ENCODE measurements at regions of chr9 and their contacts with region 1.

Region 1: GRCh38 chr9:76433836-76434235 is 25.1 kb upstream of the GCNT1 start:
- DNase-seq: no peak
- ATAC-seq: no peak
- H3K4me3 ChIP-seq: no peak overlapping the region
- H3K4me3 Mint-ChIP-seq: no peak overlapping the region
- H3K27ac ChIP-seq: no peak overlapping the region
- H3K27ac Mint-ChIP-seq: no peak overlapping the region
- H3K4me1 ChIP-seq: no peaks in the 10 kb centered on the region
- H3K4me1 Mint-ChIP-seq: no peaks in the 10 kb centered on the region
- H3K27me3 ChIP-seq: peaks cover 0 to 6% of the 10 kb centered on the region in 2 experiments
- H3K27me3 Mint-ChIP-seq: no peaks in the 10 kb centered on the region

Region 2: DNA sequence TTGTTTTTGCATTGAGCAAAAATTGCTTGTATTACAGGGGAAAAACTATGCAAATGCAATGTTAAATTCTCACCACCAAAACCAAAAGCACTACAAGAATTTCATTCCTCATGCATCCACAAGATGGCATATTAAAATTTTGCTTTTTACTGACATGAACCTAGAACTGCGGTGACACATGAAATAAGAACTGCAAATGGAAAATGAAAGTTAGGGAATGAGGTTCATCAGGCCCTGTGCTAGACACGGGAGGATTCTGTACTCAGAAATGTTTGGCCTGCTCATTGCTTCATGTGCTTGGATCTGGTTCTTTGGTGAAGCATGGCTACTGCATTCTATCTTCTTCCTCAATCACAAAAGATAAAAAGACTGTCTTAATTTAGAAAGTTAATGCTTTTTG is 30.5 kb before region 1 on chr9:
- CTCF ChIA-PET with region 1: no interaction called
- POLR2A ChIA-PET with region 1: no interaction called
- DNase-seq: peak in 6 of 35 experiments; percentile 1 to 73 (median 8)
- ATAC-seq: peak; percentile 69 to 98 (median 76)
- H3K4me3 ChIP-seq: no peak overlapping the region
- H3K4me3 Mint-ChIP-seq: peak overlapping the region; percentile 43 to 63 (median 51)
- H3K27ac ChIP-seq: peak overlapping the region; percentile 16
- H3K27ac Mint-ChIP-seq: peak overlapping the region; percentile 87 to 91
- H3K4me1 ChIP-seq: peaks cover 0 to 3% of the 10 kb centered on the region in 2 experiments
- H3K4me1 Mint-ChIP-seq: peaks cover 9 to 23% (median 15%) of the 10 kb centered on the region in 3 donors
- H3K27me3 ChIP-seq: no peaks in the 10 kb centered on the region
- H3K27me3 Mint-ChIP-seq: no peaks in the 10 kb centered on the region

Region 3: GRCh38 chr9:76419782-76420380 is 14.0 kb before region 1 on chr9:
- CTCF ChIA-PET with region 1: interaction called in 1 of 2 experiments, 11 read pairs
- POLR2A ChIA-PET with region 1: no interaction called
- DNase-seq: peak in 1 of 35 experiments; percentile 21
- ATAC-seq: no peak
- H3K4me3 ChIP-seq: no peak overlapping the region
- H3K4me3 Mint-ChIP-seq: no peak overlapping the region
- H3K27ac ChIP-seq: no peak overlapping the region
- H3K27ac Mint-ChIP-seq: no peak overlapping the region
- H3K4me1 ChIP-seq: peaks cover 4 to 10% of the 10 kb centered on the region in 2 experiments
- H3K4me1 Mint-ChIP-seq: peaks cover 14 to 38% (median 29%) of the 10 kb centered on the region in 3 donors
- H3K27me3 ChIP-seq: no peaks in the 10 kb centered on the region
- H3K27me3 Mint-ChIP-seq: no peaks in the 10 kb centered on the region

Region 4: DNA sequence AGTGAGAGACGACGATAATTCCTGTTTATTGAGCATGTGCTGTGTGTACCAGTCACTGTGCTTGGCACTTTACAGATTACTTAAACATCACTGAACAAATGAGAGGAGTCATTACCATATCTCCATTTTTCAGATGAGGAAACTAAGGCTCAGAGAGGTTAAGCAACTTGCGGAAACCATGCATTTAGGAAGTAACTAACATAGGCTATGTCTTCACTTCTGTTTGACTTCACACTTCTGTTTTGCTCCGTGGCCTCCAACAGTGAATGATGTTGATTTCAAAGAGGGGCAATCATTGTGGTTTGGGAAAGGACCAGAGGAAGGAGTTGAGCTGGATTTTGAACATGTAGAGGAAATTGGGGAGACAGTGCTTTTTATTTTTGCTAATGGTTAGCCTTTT is 41.9 kb after region 1 on chr9:
- CTCF ChIA-PET with region 1: no interaction called
- POLR2A ChIA-PET with region 1: no interaction called
- DNase-seq: no peak
- ATAC-seq: no peak
- H3K4me3 ChIP-seq: no peak overlapping the region
- H3K4me3 Mint-ChIP-seq: no peak overlapping the region
- H3K27ac ChIP-seq: no peak overlapping the region
- H3K27ac Mint-ChIP-seq: no peak overlapping the region
- H3K4me1 ChIP-seq: peaks cover 0 to 5% of the 10 kb centered on the region in 2 experiments
- H3K4me1 Mint-ChIP-seq: peaks cover 0 to 16% (median 0%) of the 10 kb centered on the region in 3 donors
- H3K27me3 ChIP-seq: peaks cover 0 to 2% of the 10 kb centered on the region in 2 experiments
- H3K27me3 Mint-ChIP-seq: no peaks in the 10 kb centered on the region

Region 5: DNA sequence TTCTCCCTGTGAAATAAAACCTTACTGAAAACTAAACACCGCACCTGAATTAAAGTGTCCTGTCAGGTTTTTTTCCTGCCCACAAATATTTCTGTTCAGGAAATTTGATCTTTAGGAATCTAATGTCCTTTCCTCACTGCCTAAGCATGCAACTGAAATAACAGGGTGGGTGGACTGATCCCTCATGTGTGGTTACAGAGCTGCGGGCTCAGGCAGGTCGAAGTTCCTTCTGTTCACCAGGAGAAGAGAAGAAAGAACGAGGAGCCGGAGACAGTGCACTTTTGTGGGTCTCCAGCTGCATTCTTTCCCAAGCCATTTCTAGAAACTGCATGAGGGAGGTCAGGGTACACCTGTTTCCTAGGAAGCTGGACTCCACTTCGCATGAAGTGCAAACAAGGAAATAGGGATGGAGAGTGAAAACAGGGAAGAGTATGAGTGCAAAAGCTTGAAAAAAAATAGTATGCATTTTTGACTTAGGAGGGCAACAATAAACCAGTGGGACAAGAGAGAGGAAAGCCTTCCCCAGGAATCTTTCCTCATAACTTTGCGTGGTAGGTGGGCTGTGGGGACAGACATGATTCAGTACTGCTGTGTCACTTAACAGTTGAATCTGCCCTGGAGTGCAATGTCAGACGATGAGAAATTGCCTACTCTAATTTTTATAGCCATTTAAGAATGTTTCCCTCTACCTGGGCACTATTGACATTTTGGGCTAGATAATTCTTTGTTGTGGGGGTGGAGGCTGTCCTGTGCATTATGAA is 85.4 kb after region 1 on chr9:
- CTCF ChIA-PET with region 1: no interaction called
- POLR2A ChIA-PET with region 1: no interaction called
- DNase-seq: no peak
- ATAC-seq: no peak
- H3K4me3 ChIP-seq: no peak overlapping the region
- H3K4me3 Mint-ChIP-seq: no peak overlapping the region
- H3K27ac ChIP-seq: no peak overlapping the region
- H3K27ac Mint-ChIP-seq: no peak overlapping the region
- H3K4me1 ChIP-seq: no peaks in the 10 kb centered on the region
- H3K4me1 Mint-ChIP-seq: peaks cover 0 to 5% (median 3%) of the 10 kb centered on the region in 3 donors
- H3K27me3 ChIP-seq: no peaks in the 10 kb centered on the region
- H3K27me3 Mint-ChIP-seq: peaks cover 0 to 3% of the 10 kb centered on the region in 2 donors

Region 6: DNA sequence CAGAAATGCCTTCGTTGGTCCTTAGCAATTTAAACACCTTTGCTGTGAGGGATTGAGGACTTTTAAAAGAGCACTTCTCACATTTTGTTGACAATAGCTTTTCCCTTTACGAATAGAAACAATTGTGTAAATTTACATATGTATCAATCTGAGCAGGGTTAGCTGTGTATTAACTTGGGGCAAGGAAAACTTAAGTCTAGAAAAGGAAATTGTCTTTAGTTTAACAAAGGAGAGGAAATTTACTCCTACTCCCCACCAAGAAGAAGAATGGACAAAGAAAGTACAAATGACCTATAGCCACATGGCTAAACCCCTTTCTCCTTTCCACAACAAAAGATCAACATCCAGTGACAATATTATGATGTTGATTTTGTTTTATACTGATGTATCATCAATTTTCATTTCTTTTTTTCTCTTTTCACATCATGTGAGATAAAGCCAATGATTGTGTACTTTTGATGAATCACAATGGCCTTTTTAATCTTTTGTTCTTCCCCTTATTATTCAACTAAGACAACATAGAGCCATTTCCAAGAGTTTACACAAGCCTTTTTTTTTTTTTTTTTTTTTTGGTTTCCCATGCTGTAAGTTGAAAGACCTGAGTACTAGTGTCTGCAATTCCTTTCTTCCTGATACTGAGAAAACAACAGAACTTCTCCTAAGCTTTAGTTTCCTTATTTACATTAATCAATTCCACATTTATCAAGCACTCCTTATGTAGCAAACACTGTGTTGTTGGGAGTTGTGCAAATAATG is 604.6 kb after region 1 on chr9:
- CTCF ChIA-PET with region 1: no interaction called
- POLR2A ChIA-PET with region 1: no interaction called
- DNase-seq: no peak
- ATAC-seq: no peak
- H3K4me3 ChIP-seq: no peak overlapping the region
- H3K4me3 Mint-ChIP-seq: no peak overlapping the region
- H3K27ac ChIP-seq: no peak overlapping the region
- H3K27ac Mint-ChIP-seq: no peak overlapping the region
- H3K4me1 ChIP-seq: no peaks in the 10 kb centered on the region
- H3K4me1 Mint-ChIP-seq: no peaks in the 10 kb centered on the region
- H3K27me3 ChIP-seq: peaks cover 0 to 4% of the 10 kb centered on the region in 2 experiments
- H3K27me3 Mint-ChIP-seq: peaks cover 10 to 12% of the 10 kb centered on the region in 2 donors